Activated CD4-positive, alpha-beta T cell treated with anti-CD3 and anti-CD28 coated beads, Interleukin-2, amount 10 ng/mL, durations not matched to agents 24 days and 14 days (primary cell): ENCODE measurements at regions of chr16 and their contacts with region 1.

Region 1: GRCh38 chr16:1929578-1930337 is 11.5 kb upstream of the HS3ST6 start:
- DNase-seq: peak; percentile 99
- H3K4me3 Mint-ChIP-seq: peak overlapping the region; percentile 67
- H3K27ac Mint-ChIP-seq: no peak overlapping the region
- H3K4me1 Mint-ChIP-seq: peaks cover 2% of the 10 kb centered on the region
- H3K27me3 Mint-ChIP-seq: peaks cover 1% of the 10 kb centered on the region

Region 2: DNA sequence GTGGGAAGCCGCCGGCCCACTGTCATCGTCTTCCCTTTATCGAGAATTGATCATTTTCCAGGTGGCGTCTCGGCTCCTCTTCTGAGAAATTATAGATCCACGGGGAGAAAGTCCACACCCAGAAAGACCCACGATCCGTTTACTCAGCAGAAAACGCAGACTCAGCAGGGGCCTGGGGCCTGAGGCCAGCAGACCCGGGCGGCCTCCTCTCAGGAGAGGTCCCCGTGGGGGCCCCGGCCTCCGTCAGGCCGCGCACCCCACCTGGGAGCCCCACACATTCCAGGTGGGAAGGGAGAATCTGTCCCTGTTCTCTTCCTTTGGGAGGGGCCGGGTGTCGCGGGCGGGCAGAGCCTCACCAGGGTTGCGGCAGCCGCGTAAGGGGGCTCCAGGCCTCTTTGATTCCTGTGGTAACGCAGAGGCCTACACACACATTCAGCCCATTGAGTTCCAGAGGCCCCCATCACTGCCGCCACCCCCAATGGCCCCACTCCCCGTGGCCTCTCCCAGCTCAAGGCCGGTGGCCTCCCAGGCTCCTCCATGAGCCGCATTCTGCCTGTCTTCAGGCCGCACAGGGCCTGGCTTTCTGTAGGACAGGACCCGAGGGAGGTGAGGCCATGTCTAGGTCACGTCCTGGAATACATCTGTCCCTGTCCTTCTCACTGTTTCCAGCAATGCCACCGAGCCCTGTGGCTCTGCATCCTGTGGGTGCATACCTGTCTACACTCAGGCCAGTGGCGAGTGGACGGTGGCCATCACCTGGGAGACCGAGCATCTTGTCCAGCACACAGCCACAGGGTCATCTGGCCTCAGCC is 134.7 kb before region 1 on chr16:
- intact Hi-C with region 1: no loop called
- DNase-seq: no peak
- H3K4me3 Mint-ChIP-seq: no peak overlapping the region
- H3K27ac Mint-ChIP-seq: no peak overlapping the region
- H3K4me1 Mint-ChIP-seq: no peaks in the 10 kb centered on the region
- H3K27me3 Mint-ChIP-seq: no peaks in the 10 kb centered on the region

Region 3: GRCh38 chr16:1812732-1813163 is 117.0 kb before region 1 on chr16:
- intact Hi-C with region 1: loop called (anchors 5 kb)
- DNase-seq: peak; percentile 82
- H3K4me3 Mint-ChIP-seq: no peak overlapping the region
- H3K27ac Mint-ChIP-seq: no peak overlapping the region
- H3K4me1 Mint-ChIP-seq: peaks cover 4% of the 10 kb centered on the region
- H3K27me3 Mint-ChIP-seq: no peaks in the 10 kb centered on the region

Region 4: DNA sequence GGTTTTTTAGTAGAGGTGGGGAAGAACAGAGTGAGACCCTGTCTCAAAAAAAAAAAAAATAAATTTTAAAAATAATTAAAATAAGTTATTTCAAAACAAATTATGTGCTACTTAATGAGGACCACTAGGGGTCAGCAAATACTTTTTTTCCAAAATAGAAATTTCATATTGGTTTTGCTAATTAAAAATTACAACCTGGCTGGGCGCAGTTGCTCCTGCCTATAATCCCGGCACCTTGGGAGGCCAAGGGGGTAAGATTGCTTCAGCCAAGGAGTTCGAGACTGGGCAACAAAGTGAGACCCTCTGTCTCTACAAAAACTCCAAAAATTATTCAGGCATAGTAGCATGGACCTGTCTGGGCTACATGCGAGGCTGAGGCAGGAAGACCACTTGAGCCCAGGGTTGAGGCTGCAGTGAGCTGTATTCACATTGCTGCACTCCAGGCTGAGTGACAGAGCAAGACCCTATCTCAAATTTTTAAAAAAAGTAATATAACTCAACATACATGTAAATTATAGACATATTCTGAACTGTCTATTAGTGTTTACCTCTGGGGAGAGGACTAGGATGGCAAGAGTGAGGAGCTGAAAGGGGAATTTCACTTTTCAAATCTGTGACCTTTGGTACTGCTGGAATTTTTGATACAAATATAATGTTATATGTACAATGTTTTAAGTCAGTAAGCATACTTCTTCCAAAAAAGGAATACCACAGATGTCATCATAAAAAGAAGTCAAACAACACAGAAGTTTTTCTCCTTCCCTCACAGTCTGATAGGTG is 65.9 kb before region 1 on chr16:
- intact Hi-C with region 1: loop called (anchors 2 kb)
- DNase-seq: no peak
- H3K4me3 Mint-ChIP-seq: no peak overlapping the region
- H3K27ac Mint-ChIP-seq: no peak overlapping the region
- H3K4me1 Mint-ChIP-seq: no peaks in the 10 kb centered on the region
- H3K27me3 Mint-ChIP-seq: peaks cover 28% of the 10 kb centered on the region